ENCODE measurements at regions of chr15 and their contacts with region 1.

Region 1: DNA sequence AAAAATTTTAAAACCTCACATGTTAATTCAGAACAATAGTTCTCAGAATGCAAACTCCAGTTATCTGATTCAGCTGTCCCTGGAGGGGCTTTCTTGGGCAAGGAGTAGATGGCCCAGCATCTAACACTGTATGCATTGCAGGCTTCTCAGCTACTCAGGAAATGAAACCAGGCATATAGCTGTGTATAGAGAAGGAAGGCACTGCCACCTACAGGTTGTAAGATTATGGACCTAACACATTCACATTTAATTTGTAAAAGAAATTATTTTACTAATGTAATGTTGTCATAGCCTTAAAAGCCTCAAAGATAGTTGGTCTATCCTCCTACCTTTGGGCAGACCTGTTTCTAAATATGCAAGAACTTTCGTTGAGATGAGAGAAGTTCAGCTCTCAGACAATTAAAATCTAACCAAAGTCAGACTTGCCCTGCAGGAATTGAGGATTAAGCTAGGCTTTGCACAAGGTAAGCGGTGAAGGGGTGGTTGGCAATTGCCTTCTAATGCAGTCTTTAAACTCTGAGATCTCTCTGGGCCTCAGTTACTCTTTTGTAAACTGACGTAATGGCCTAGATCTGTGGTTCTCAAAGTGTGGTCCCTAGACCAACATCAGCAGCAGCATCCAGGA is 132.8 kb upstream of the SLC24A5 start:
- DNase-seq: peak; percentile 68
- H3K4me3 ChIP-seq: no peak overlapping the region
- H3K27ac ChIP-seq: no peak overlapping the region
- H3K4me1 ChIP-seq: no peaks in the 10 kb centered on the region
- H3K27me3 ChIP-seq: no peaks in the 10 kb centered on the region
- CTCF ChIP-seq: peak; percentile 40 to 47
- POLR2A ChIP-seq: no peak

Region 2: GRCh38 chr15:47184003-47184907 is 803.8 kb before region 1 on chr15:
- CTCF ChIA-PET with region 1: interaction called, 17 read pairs
- POLR2A ChIA-PET with region 1: no interaction called
- dilution Hi-C with region 1: no loop called
- intact Hi-C with region 1: no loop called
- DNase-seq: peak; percentile 62
- H3K4me3 ChIP-seq: peak overlapping the region; percentile 57 to 76 (median 72)
- H3K27ac ChIP-seq: peak overlapping the region; percentile 70
- H3K4me1 ChIP-seq: peaks cover 24% of the 10 kb centered on the region
- H3K27me3 ChIP-seq: no peaks in the 10 kb centered on the region
- CTCF ChIP-seq: no peak
- POLR2A ChIP-seq: no peak

Region 3: DNA sequence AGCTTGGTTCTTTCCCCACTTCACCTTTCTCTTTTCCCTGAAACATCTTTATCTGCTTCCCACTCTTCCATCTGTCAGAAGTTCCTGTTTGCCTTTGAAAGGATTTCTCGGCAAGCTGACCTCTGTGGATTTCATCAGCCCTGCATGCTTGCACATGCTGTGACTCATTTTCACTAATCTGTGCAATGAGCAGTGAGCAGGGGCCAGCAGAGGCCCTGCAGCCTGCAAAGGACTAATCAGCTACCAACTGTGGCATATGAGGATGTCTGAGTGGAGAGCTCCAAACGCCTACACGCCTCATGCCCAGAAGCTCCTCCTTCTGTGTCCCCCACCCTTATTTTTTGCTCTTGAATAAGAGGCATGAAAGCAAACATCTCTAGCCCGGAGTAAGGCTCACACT is 603.7 kb before region 1 on chr15:
- CTCF ChIA-PET with region 1: interaction called, 11 read pairs
- POLR2A ChIA-PET with region 1: no interaction called
- dilution Hi-C with region 1: no loop called
- intact Hi-C with region 1: no loop called
- DNase-seq: peak; percentile 97
- H3K4me3 ChIP-seq: no peak overlapping the region
- H3K27ac ChIP-seq: peak overlapping the region; percentile 83
- H3K4me1 ChIP-seq: peaks cover 21% of the 10 kb centered on the region
- H3K27me3 ChIP-seq: no peaks in the 10 kb centered on the region
- CTCF ChIP-seq: no peak
- POLR2A ChIP-seq: no peak

Region 4: GRCh38 chr15:47551079-47551478 is 436.9 kb before region 1 on chr15:
- CTCF ChIA-PET with region 1: interaction called, 11 read pairs
- POLR2A ChIA-PET with region 1: no interaction called
- dilution Hi-C with region 1: no loop called
- intact Hi-C with region 1: no loop called
- DNase-seq: peak; percentile 20
- H3K4me3 ChIP-seq: no peak overlapping the region
- H3K27ac ChIP-seq: no peak overlapping the region
- H3K4me1 ChIP-seq: no peaks in the 10 kb centered on the region
- H3K27me3 ChIP-seq: no peaks in the 10 kb centered on the region
- CTCF ChIP-seq: peak in 1 of 2 donors; percentile 31
- POLR2A ChIP-seq: no peak

Region 5: GRCh38 chr15:47975427-47975826 is 12.6 kb before region 1 on chr15:
- CTCF ChIA-PET with region 1: interaction called, 11 read pairs
- POLR2A ChIA-PET with region 1: no interaction called
- dilution Hi-C with region 1: no loop called
- intact Hi-C with region 1: no loop called
- DNase-seq: no peak
- H3K4me3 ChIP-seq: no peak overlapping the region
- H3K27ac ChIP-seq: no peak overlapping the region
- H3K4me1 ChIP-seq: no peaks in the 10 kb centered on the region
- H3K27me3 ChIP-seq: peaks cover 3 to 4% of the 10 kb centered on the region in 2 experiments
- CTCF ChIP-seq: no peak
- POLR2A ChIP-seq: no peak

Region 6: DNA sequence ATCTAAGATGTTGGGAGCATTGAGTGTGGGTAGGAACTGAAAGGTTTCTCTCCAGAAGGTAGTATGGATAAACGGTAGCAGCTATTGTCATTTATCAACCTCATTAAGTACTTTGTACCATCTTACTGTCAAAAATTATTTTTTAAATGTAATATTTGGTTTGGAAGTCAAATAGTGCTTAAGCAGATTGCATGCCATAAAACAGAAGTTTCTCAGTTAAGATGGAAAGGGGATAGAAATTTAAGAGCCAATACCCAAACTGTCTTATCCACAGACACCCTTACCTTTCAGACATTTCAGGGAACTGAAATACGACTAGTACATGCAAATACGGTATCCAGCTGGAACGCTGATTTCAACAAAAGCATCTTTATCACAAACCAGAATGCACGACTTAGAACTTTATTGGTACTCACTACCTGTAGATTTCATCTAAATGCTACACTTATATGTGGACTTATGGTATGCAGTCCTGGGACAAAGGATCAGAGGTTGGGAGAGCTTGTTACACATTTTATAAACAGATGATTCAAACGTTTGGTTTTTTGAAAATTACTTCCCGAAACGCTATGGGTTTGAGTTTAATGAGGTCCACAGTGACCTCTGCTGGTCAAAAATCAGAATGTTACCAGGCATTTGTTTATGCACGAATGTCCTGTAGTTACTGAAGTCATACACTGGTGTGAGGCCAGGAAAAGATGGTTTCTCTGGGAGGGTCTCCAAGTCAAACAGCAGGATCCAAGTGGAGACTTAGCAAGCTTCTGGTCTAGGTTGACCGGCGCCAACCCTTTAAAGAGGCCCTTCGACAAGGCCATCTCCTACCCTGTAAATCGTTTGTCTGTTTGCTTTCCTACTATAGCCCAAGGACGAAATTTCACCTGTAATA is 297.6 kb after region 1 on chr15:
- CTCF ChIA-PET with region 1: interaction called, 12 read pairs
- POLR2A ChIA-PET with region 1: no interaction called
- dilution Hi-C with region 1: no loop called
- intact Hi-C with region 1: loop called (anchors 1 kb)
- DNase-seq: peak; percentile 90
- H3K4me3 ChIP-seq: peak overlapping the region in 1 of 3 experiments; percentile 55
- H3K27ac ChIP-seq: no peak overlapping the region
- H3K4me1 ChIP-seq: peaks cover 3% of the 10 kb centered on the region
- H3K27me3 ChIP-seq: peaks cover 4 to 8% of the 10 kb centered on the region in 2 experiments
- CTCF ChIP-seq: peak; percentile 41 to 70
- POLR2A ChIP-seq: no peak

Measured in endothelial cell of umbilical vein (primary cell).